ENCODE measurements at regions of chr11 and their contacts with region 1.

Region 1: GRCh38 chr11:86068951-86069407 is at the start of gene PICALM:
- DNase-seq: peak; percentile 99
- ATAC-seq: peak; percentile 98
- H3K4me3 ChIP-seq: peak within 1 kb of the TSS; percentile 93 to 100
- H3K27ac ChIP-seq: peak within 1 kb of the TSS; percentile 97 to 99
- H3K4me1 ChIP-seq: no peaks in the 10 kb centered on the region
- H3K27me3 ChIP-seq: no peaks in the 10 kb centered on the region
- total RNA-seq, gene PICALM: 306 to 486 TPM

Region 2: DNA sequence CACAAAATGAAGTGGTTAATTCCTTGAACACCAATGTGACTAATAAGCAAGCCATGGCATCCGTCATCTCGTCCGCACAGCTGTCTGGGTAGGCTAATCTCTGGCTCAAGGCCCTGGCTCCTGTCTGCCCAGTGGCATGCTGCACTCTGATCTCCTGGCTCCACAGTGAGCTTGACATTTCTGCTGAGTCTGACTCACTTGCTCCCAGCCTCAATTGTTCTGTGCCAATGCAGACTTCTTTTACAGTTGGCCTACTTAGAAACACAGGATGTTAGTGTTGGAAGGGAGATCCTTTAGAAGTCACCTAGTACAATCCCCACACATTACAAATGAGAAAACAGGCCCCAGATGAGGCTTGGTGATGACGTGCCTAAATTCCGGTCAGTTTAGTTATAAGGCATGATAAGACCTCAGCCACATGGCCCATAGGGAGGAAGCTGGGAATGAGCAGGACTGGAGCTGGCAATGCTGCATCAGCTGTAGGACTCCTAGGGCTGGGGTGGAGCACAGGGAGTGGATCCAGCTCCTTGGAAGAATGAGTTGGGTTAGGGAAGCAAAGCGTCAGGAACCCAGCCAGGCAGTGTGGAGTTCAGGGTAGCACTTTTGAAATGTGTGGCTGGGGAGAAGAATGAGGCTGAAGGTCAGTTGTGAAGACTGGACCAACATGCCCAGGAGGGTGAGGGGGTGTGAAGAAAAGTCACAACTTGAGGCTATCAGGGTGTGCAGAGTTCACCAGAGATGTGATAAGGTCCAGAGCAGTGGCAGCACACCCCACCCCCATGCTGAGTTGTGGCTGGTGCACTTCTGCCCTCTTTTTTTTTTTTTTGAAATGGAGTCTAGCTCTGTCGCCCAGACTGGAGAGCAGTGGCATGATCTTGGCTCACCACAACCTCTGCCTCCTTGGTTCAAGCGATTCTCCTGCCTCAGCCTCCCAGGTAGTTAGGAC is 105.4 kb after region 1 on chr11:
- intact Hi-C with region 1: loop called (anchors 1 to 2 kb)
- DNase-seq: peak; percentile 92 to 93
- ATAC-seq: peak; percentile 94
- H3K4me3 ChIP-seq: no peak overlapping the region
- H3K27ac ChIP-seq: peak overlapping the region; percentile 29 to 84
- H3K4me1 ChIP-seq: peaks cover 0 to 2% of the 10 kb centered on the region in 2 donors
- H3K27me3 ChIP-seq: no peaks in the 10 kb centered on the region